Astrocyte of the cerebellum (primary cell): ENCODE measurements at regions of chr9 and their contacts with region 1.

Region 1: DNA sequence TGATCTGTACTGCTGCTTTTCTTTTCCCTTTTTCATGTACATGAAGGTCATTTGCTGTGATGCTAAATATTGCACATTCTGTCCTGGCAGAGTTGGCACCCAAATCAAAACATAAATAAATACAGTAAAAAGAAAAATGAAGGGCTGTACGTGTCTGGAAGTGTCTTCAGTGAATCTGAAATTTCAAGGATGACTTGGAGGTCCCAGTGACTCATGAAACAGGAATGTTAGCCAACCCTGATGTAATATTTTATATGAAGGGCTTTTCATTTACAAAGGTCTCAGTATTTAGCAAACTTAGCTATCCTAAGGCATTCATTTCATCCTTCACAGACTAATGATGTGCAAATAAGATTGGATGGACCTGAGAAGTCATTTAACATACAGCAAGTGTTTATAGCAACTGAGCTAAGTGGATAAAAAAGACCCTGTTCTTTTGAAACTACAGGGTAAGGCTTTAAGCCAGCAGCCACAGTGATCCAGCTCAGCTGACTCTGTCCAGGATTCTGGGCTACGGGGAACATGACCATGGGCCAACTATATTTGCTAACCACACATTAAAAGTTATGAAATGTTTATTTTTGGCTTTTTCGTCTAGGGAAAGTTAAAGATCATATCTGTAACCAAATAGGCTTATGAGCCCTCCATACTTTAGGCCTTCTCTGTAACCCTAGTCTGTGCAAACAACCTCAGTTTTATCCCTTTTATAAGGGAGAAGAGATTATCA is 104.0 kb upstream of the DMRTA1 start:
- DNase-seq: peak; percentile 83
- H3K4me3 ChIP-seq: no peak overlapping the region
- CTCF ChIP-seq: no peak

Region 2: GRCh38 chr9:22274477-22274876 is 68.2 kb before region 1 on chr9:
- in situ Hi-C with region 1: loop called (anchors 5 kb)
- DNase-seq: no peak
- H3K4me3 ChIP-seq: no peak overlapping the region
- CTCF ChIP-seq: no peak

Region 3: DNA sequence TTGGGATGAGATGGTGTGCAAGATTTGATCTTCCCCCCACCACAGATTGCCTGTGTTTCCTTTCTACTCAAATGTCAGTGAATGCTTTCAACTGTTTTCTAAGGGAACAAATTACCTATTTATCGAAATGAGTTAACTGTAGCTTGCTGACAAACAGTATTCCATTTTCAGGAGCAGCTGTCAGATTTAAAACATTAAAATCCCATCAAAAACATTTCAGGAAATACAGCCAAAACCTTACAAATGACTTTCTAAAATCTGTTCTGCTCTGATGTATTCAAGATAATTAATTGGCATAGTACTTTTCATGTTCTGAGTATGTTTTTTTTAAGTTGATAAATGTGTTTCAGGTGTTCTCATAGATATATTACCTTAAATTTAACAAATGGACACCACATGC is 54.0 kb before region 1 on chr9:
- in situ Hi-C with region 1: no loop called
- DNase-seq: no peak
- H3K4me3 ChIP-seq: no peak overlapping the region
- CTCF ChIP-seq: no peak